ENCODE measurements at regions of chr15 and their contacts with region 1.

Region 1: DNA sequence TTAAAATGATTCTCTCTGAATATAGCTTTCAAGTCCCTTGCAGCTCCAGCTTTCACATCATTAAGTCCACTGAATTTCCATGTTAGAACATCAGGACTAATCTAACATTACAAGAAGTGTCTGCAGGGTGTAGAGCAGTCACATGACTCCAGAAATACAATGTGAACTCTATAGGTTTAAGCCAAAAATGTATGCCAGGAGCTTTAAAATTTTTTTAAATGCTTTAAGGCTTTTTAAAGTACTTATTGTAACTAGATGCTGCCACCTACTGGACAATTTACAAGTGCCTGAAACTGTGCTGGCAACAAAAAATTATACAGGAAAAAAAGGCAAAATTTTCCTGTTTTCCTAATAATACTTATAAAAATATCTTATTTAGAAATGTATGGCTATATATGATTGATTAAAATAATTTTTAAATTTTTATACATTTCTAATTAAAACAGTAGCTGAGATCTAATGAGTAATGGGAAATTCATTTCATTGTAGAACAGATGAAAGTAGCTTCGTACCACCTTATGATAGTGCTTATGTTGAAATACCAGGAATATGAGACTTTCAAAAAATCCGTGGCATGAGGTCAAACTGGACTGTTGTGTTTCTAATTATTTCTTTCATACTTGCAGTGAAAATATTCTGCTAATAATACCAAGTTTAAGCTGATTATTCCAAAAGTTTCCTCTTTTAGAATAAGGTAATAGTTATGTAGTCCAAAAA is 25.7 kb downstream of the FSIP1 start:
- DNase-seq: no peak

Region 2: GRCh38 chr15:38817427-38818156 is 939.4 kb before region 1 on chr15:
- intact Hi-C with region 1: loop called (anchors 5 kb)
- DNase-seq: peak; percentile 50 to 96 (median 80)

Region 3: DNA sequence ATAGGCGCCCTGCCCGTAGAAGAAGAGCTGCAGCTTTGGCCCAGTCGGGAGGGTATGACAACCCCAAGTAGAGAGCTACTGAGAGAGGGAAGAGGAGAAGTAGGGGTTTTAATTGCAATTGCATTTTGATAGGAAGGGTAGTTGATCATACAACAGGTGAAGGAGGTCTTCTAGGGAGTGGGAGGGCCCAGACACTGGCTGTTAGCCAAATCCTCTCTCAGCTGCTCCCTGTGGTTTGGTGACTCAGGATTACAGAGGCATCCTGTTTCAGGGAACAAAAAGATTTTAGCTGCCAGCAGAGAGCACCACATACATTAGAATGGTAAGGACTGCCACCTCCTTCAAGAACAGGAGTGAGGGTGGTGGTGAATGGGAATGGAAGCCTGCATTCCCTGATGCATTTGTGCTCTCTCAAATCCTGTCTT is 585.0 kb before region 1 on chr15:
- intact Hi-C with region 1: loop called (anchors 5 kb)
- DNase-seq: peak in 7 of 10 donors; percentile 11 to 75 (median 26)

Region 4: DNA sequence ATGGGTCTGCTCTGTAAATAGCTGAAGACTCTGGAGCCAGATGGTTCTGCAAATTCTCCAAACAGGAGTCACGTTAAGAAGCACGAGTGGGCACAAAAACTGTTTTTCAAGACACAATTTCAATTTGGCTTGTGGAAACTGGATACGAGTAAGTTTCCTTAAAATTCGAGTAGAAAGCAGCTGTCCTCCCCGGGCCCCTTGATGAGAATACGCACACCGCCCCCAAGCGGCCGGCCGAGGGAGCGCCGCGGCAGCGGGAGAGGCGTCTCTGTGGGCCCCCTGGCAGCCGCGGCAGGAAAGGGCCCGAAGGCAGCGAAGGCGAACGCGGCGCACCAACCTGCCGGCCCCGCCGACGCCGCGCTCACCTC is 176.9 kb before region 1 on chr15:
- intact Hi-C with region 1: loop called (anchors 10 kb)
- DNase-seq: peak; percentile 67 to 96 (median 84)

Region 5: GRCh38 chr15:39686000-39686613 is 70.9 kb before region 1 on chr15:
- intact Hi-C with region 1: loop called (anchors 1 kb)
- DNase-seq: peak in 3 of 10 donors; percentile 31 to 41 (median 32)

Region 6: GRCh38 chr15:39833515-39833981 is 76.6 kb after region 1 on chr15:
- intact Hi-C with region 1: no loop called
- DNase-seq: no peak